Heart left ventricle (tissue), 16 donors: ENCODE measurements at regions of chr17 and their contacts with region 1.

Region 1: GRCh38 chr17:9307292-9308042 is 268.2 kb downstream of the STX8 start:
- DNase-seq: no peak
- ATAC-seq: no peak
- H3K4me3 ChIP-seq: no peak overlapping the region
- H3K27ac ChIP-seq: no peak overlapping the region
- H3K4me1 ChIP-seq: no peaks in the 10 kb centered on the region
- H3K27me3 ChIP-seq: no peaks in the 10 kb centered on the region
- CTCF ChIP-seq: no peak
- POLR2A ChIP-seq: no peak

Region 2: GRCh38 chr17:9350080-9350479 is 42.6 kb after region 1 on chr17:
- intact Hi-C with region 1: loop called in 1 of 10 experiments (anchors 10 kb)
- DNase-seq: no peak
- ATAC-seq: no peak
- H3K4me3 ChIP-seq: no peak overlapping the region
- H3K27ac ChIP-seq: no peak overlapping the region
- H3K4me1 ChIP-seq: no peaks in the 10 kb centered on the region
- H3K27me3 ChIP-seq: no peaks in the 10 kb centered on the region
- CTCF ChIP-seq: no peak
- POLR2A ChIP-seq: no peak